Dorsolateral prefrontal cortex (tissue), 120 donors: ENCODE measurements at regions of chr6 and their contacts with region 1.

Region 1: DNA sequence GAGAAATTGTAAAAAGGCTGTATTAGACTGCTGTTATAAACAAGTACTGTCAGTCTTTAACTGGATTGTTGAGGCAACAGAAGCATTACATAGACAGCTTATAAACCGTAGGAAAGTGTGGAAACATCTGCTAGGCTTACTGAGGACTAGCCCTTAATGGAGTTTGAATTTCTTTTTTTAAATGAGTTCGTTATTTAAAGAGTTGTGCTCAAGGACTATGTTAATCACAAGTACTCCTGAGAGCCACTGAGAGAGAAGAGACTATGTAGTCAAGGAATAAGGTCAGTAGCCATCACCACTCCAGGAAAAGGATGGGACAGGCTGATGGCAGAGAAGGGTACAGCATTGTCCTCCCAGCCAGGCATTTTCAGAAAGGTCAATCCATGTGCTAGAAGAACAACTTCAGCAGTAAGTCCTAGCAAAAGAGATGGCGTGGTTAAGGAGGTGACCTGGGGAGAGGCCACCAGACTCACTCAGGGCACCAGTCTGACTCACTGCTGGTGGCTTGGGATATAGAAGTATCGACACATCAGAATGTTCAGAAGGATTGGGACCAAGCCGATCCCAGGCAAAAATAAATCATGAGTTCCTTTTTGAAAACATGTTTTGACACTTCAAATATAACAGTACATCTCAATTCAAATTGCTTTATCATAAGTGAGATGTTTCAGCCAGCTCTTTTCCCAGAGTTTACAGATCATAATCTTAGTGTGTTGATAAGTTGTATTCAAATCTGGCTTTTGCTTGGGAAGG is 6.4 kb downstream of the RPS12 start:
- DNase-seq: no peak
- H3K4me3 ChIP-seq: no peak overlapping the region
- H3K27ac ChIP-seq: peak overlapping the region in 41 of 59 donors; percentile 2 to 71 (median 40)
- H3K27me3 ChIP-seq: no peaks in the 10 kb centered on the region
- CTCF ChIP-seq: no peak

Region 2: GRCh38 chr6:132750455-132751248 is 70.2 kb before region 1 on chr6:
- intact Hi-C with region 1: no loop called
- DNase-seq: no peak
- H3K4me3 ChIP-seq: no peak overlapping the region
- H3K27ac ChIP-seq: no peak overlapping the region
- H3K27me3 ChIP-seq: peaks cover 0 to 3% (median 0%) of the 10 kb centered on the region in 45 donors
- CTCF ChIP-seq: no peak

Region 3: DNA sequence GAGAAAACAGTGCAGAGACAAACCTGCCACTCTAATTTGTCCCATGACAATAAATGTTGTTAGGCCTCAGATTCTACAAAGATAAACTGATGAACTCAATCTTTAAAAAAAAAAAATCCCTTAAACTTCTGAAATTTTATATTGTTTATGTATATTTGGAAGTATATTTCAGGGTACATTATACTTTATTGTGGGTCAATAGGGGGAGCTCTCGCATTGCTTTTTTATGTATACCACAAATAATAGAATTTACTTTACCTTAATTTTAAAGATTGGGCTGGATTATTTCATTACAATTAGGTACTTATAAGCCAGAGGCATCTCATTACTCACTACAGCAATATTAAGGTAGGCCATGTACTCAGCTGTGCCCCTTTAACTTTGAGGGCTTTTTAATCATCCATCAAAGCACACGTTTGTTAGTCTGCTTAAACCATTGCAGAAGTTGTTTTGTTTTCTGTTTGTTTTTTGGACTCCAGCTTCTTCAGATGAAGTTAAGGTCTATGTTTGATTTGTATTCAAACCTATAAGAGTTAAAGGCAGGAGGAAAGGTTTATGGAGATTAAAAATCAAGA is 364.1 kb after region 1 on chr6:
- intact Hi-C with region 1: loop called in 1 of 2 experiments (anchors 10 kb)
- DNase-seq: no peak
- H3K4me3 ChIP-seq: peak overlapping the region in 1 of 59 donors; percentile 21
- H3K27ac ChIP-seq: no peak overlapping the region
- H3K27me3 ChIP-seq: peaks cover 0 to 6% (median 0%) of the 10 kb centered on the region in 45 donors
- CTCF ChIP-seq: peak; percentile 45 to 88 (median 68)

Region 4: DNA sequence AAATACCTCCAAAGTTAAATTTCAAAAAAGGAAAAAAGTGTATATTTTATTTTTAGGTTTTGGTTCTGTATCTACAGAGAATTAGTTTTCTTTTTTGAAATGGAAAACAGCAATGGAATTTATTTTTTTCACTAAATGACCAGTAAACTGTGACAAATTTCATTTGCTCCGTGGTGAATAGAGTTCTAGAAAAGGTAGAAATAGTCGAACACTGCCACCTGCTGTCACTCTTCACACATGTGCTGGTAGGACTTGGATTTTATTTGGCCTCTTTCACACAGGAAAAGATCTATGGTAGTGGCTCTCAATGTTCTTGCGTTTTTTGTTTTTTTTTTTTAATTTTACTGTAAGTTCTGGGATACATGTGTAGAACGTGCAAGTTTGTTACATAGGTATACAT is 732.8 kb after region 1 on chr6:
- intact Hi-C with region 1: loop called in 1 of 2 experiments (anchors 10 kb)
- DNase-seq: peak in 2 of 10 donors; percentile 43 to 55
- H3K4me3 ChIP-seq: no peak overlapping the region
- H3K27ac ChIP-seq: no peak overlapping the region
- H3K27me3 ChIP-seq: peaks cover 0 to 3% (median 0%) of the 10 kb centered on the region in 45 donors
- CTCF ChIP-seq: peak; percentile 40 to 83 (median 64)